ENCODE measurements at regions of chr9 and their contacts with region 1.

Region 1: DNA sequence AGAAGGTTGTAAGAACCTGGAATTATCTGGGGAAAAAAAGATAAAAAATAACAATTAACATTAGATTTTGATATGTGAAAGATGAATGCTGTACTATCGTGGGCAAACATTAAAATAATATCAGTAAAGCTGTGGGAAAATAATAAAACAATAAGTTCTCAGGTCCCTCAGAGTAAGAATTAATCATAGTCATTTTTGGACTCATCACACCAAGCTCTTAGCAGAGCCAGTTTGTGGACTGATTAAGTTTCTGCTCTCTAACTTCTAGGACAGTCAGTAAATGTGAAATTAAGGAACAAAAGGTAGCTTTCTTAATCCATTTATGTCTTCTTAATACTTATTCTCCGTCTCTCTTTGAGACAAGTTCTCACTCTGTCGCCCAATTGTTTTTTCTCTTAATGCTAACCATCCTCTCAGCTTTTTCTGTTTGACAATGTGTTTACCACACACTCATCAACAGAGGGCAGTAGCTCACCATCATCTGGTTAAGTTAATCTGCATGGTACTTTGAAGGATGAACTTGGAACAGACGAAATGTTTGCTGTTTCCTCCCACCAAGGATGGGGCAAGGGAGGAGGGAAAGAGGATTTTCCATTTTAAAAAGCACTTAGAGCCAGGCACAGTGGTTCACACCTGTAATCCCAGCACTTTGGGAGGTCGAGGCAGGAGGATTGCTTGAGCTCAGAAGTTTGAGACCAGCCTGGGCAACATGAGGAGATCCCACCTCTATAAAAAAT is 5.3 kb upstream of the ACO1 start:
- DNase-seq: no peak
- H3K4me3 ChIP-seq: no peak overlapping the region
- CTCF ChIP-seq: peak; percentile 79

Region 2: DNA sequence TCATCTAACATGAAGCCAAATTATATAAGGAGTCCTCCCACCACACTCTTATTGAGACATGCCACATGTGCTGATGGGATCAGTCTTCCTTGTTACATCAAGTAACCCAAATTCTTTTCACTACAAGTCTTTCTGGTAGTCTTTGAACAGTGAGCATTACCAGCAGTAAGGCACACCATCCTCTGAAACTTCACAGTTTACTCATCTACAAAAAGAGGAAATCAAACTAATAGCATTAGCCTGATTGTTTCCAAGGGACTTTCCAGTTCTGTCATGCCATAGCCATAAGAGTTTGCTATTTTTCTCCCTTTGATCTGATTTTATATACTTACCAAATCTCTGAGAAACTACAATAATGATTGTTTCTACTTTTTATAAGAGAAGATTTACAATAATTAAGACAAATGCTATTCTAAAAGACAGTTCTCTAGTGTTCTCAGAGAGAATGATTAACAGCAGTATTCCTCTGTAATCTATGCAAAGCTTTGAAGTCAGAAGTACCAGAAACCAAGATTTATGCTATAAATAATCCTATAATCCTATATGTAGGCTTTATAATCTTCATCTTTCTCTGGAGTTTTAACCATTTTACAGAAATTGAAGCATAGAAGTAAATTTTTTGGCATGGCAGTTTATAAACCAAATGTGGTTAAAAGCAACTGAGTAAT is 160.9 kb before region 1 on chr9:
- CTCF ChIA-PET with region 1: no interaction called
- POLR2A ChIA-PET with region 1: no interaction called
- DNase-seq: no peak
- H3K4me3 ChIP-seq: no peak overlapping the region
- CTCF ChIP-seq: no peak

Region 3: DNA sequence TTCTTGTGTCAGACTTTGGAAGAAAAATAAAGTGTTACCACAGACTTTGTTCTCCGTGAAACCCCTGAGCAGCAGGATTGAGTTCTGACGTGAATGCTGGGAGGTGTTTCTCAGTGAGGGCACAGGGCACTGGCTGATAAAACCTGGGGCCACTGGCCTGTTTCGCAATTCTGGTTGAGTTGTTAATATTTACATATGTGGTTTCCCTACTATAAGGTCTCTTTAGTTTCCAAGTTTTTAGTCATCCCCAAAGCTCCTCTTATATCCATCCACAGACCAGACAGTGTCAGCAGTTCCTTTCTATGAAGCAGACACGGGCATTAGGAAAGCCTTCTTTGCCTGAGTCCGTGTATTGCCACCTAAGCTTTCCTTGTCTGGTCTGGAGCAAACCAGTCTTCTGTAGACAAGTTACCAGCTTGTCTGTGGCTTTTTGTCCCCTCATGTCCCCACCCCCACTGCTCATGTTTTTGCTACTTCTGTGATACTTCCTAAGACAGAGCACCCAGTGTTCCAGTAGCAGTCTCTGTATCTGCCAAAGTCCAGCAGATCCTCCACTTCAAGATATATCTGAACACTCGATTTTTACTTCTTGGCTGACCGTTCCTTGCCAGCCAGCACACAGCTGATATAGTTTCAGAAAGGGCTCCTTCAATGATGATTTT is 47.2 kb after region 1 on chr9:
- CTCF ChIA-PET with region 1: interaction called, 233 read pairs
- POLR2A ChIA-PET with region 1: interaction called, 3 read pairs
- DNase-seq: peak; percentile 55
- H3K4me3 ChIP-seq: no peak overlapping the region
- CTCF ChIP-seq: no peak

Region 4: GRCh38 chr9:32468740-32469139 is 89.6 kb after region 1 on chr9:
- CTCF ChIA-PET with region 1: interaction called, 10 read pairs
- POLR2A ChIA-PET with region 1: no interaction called
- DNase-seq: no peak
- H3K4me3 ChIP-seq: no peak overlapping the region
- CTCF ChIP-seq: no peak

Region 5: DNA sequence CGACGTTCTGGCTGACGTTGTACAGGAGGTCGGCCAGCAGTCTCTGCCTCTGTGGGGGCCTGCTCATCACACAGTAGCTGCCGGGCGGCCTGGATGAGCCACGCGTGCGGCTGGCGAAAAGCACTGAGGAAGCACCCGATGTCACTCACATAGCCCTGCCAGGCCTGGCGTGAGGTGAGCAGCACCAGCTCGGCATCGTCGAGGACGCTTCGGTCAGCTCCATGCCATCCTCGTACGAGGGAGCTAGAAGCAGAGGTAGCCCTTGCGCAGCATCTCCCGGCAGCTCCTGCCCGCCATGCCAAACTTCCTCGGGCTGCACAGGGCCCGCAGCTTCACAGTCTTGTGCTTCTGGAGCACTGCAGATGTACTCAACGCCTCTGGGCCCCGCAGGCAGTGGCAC is 187.6 kb after region 1 on chr9:
- CTCF ChIA-PET with region 1: interaction called, 241 read pairs
- POLR2A ChIA-PET with region 1: interaction called, 9 read pairs
- DNase-seq: no peak
- H3K4me3 ChIP-seq: no peak overlapping the region
- CTCF ChIP-seq: no peak

Region 6: DNA sequence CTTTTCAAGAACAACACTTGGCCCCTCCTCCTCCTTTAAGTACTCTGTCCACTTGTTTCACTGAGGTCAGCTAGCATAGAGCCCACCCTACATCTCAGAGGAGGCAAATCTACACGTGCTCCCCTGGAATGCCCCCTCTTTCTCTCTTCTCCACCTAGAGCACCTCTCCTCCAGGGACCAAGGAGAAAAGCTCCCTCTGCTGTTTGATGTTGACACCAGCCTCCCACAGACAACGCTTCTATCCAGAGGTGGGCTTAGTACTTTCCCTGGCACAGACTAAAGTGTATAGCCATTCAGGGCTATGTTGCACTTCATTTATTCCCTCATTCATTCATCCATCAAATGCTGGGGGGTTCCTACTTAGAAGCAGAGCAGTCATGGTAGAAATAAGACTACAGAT is 324.5 kb after region 1 on chr9:
- CTCF ChIA-PET with region 1: interaction called, 11 read pairs
- POLR2A ChIA-PET with region 1: no interaction called
- DNase-seq: no peak
- H3K4me3 ChIP-seq: no peak overlapping the region
- CTCF ChIP-seq: peak; percentile 46

Measured in AG04449 (cell line).